ENCODE measurements at regions of chr5 and their contacts with region 1.

Region 1: GRCh38 chr5:57221049-57221568 is 47.2 kb downstream of the GPBP1 start:
- DNase-seq: peak in 3 of 9 experiments; percentile 51 to 83 (median 78)
- ATAC-seq: peak; percentile 83
- H3K4me3 ChIP-seq: no peak overlapping the region
- H3K4me3 Mint-ChIP-seq: no peak overlapping the region
- H3K27ac ChIP-seq: no peak overlapping the region
- H3K27ac Mint-ChIP-seq: peak overlapping the region; percentile 64
- H3K4me1 ChIP-seq: peaks cover 14% of the 10 kb centered on the region
- H3K4me1 Mint-ChIP-seq: peaks cover 53% of the 10 kb centered on the region
- H3K27me3 ChIP-seq: no peaks in the 10 kb centered on the region
- H3K27me3 Mint-ChIP-seq: no peaks in the 10 kb centered on the region
- CTCF ChIP-seq: peak; percentile 99

Region 2: GRCh38 chr5:55936100-55936693 is 1284.9 kb before region 1 on chr5:
- CTCF ChIA-PET with region 1: no interaction called
- POLR2A ChIA-PET with region 1: no interaction called
- intact Hi-C with region 1: loop called in 1 of 2 experiments (anchors 5 kb)
- DNase-seq: peak; percentile 53 to 87 (median 80)
- ATAC-seq: peak; percentile 92
- H3K4me3 ChIP-seq: no peak overlapping the region
- H3K4me3 Mint-ChIP-seq: no peak overlapping the region
- H3K27ac ChIP-seq: no peak overlapping the region
- H3K27ac Mint-ChIP-seq: peak overlapping the region; percentile 55
- H3K4me1 ChIP-seq: no peaks in the 10 kb centered on the region
- H3K4me1 Mint-ChIP-seq: peaks cover 10% of the 10 kb centered on the region
- H3K27me3 ChIP-seq: no peaks in the 10 kb centered on the region
- H3K27me3 Mint-ChIP-seq: no peaks in the 10 kb centered on the region
- CTCF ChIP-seq: peak; percentile 86

Region 3: DNA sequence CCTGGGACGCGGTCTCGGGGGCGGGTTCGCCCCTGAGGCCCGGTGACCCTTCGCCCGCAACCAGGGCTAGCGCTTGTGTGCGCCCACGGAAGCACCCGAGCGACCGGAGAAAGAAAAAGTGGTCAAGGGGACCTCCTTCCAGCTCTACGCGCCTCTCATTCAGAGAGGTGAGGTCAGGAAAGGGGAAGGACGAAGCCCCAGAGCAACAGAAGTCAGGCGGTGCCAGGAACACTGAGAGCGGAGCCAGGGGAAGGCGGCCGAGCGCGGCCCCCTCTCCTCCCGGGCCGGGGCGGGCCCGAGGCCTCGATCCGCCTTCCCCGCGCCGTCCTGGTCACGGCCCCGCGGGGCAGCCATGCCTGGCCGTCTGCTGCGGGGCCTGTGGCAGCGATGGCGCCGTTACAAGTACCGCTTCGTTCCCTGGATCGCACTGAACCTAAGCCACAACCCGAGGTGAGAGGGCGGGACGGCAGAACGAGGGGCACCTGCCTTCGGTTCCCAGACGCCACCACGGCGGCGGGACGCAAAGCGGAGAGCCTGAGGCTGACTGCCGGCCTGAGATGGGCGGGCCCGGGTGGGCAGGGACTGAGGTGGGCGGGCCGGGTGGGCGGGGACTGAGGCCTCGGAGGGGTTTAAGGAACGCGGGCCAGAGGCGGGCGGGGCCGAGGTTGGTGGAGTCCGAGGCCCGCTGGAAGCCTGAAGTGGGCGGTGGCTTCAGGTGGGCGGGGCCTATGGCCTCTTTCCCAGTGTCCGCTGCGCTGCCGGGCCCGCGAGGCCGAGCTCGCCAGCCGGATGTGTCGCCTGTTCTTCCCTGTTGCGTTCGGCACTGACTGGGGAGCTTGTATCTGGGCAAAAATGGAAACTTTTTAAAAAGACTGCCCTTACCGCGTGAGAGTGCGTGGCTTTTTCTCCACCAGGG is 311.6 kb before region 1 on chr5 and contains the start of gene SETD9:
- CTCF ChIA-PET with region 1: interaction called, 6 read pairs
- POLR2A ChIA-PET with region 1: no interaction called
- intact Hi-C with region 1: loop called in 1 of 2 experiments (anchors 2 kb)
- DNase-seq: peak; percentile 67 to 94 (median 87)
- ATAC-seq: peak; percentile 82
- H3K4me3 ChIP-seq: peak within 1 kb of the TSS; percentile 88
- H3K4me3 Mint-ChIP-seq: peak within 1 kb of the TSS; percentile 89
- H3K27ac ChIP-seq: peak within 1 kb of the TSS; percentile 61 to 87
- H3K27ac Mint-ChIP-seq: peak within 1 kb of the TSS; percentile 88
- H3K4me1 ChIP-seq: peaks cover 8% of the 10 kb centered on the region
- H3K4me1 Mint-ChIP-seq: peaks cover 20% of the 10 kb centered on the region
- H3K27me3 ChIP-seq: no peaks in the 10 kb centered on the region
- H3K27me3 Mint-ChIP-seq: no peaks in the 10 kb centered on the region
- CTCF ChIP-seq: no peak
- total RNA-seq, gene SETD9: 2.5 to 2.9 TPM

Region 4: DNA sequence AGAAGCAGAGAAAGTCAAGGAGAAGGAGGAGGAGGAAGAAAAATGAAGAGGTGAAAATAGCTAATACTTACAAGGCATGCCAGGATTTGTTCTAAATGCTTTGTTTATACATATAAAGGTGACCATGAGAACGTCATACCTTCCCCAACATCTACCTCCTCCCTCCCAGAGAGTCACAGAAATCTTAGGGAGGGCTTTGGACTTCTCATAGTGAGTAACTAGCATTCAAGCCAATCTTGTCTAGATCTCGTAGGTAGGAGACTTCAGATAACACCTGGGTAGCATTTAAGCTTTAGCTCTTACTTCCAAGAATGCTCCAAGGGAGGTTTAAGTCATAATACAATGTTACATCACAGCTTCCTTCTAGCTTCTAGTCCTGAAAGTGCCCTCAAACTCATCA is 83.7 kb before region 1 on chr5:
- CTCF ChIA-PET with region 1: interaction called, 23 read pairs
- POLR2A ChIA-PET with region 1: interaction called, 5 read pairs
- intact Hi-C with region 1: loop called (anchors 1 to 2 kb)
- DNase-seq: peak in 1 of 9 experiments; percentile 2
- ATAC-seq: no peak
- H3K4me3 ChIP-seq: no peak overlapping the region
- H3K4me3 Mint-ChIP-seq: no peak overlapping the region
- H3K27ac ChIP-seq: no peak overlapping the region
- H3K27ac Mint-ChIP-seq: no peak overlapping the region
- H3K4me1 ChIP-seq: no peaks in the 10 kb centered on the region
- H3K4me1 Mint-ChIP-seq: no peaks in the 10 kb centered on the region
- H3K27me3 ChIP-seq: no peaks in the 10 kb centered on the region
- H3K27me3 Mint-ChIP-seq: no peaks in the 10 kb centered on the region
- CTCF ChIP-seq: no peak